ENCODE measurements at regions of chr17 and their contacts with region 1.

Region 1: DNA sequence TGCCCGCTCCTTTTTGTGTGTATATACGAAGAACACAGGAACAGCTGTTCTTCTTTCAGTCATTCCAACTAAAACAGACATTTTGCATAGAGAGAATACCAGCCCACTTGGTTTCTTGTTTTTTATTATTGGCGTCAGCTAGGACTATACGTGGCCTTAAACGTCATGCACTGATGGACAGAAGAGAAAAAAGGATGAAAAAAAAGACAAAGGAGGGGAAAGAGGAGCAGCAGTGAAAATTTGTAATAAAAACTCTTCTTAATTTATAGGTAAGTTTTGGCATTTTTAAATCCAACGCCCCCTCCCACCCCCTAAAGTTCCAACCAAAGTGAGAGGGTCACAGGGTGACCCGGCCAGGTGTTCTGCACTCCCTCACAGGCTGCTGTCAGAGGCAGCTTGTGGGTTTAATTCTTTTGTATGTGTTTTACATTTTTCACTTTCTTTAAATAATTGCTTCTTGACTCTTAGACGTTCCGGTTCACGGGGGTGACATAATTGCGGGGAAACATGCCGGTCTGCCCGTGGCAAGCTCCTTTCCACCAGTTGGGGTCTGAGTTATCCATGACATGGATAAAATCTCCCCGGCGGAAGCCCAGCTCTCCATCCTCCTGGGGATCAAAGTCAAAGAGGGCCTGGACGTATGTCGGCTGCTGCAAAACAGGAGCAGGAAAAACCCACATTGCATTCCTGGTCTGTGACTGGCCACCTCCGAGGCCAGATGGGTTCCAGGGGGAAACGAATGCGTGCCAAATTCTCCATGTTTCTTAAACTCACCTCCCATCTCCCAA is 30.9 kb upstream of the SLC25A19 start:
- DNase-seq: no peak
- ATAC-seq: no peak

Region 2: GRCh38 chr17:75405365-75406221 is 85.5 kb after region 1 on chr17 and contains the start of gene GRB2:
- intact Hi-C with region 1: loop called (anchors 2 kb)
- DNase-seq: peak; percentile 100
- ATAC-seq: peak; percentile 98
- total RNA-seq, gene GRB2: 59.0 TPM

Region 3: GRCh38 chr17:75412455-75413317 is 92.6 kb after region 1 on chr17:
- intact Hi-C with region 1: loop called (anchors 2 kb)
- DNase-seq: no peak
- ATAC-seq: peak; percentile 42

Region 4: DNA sequence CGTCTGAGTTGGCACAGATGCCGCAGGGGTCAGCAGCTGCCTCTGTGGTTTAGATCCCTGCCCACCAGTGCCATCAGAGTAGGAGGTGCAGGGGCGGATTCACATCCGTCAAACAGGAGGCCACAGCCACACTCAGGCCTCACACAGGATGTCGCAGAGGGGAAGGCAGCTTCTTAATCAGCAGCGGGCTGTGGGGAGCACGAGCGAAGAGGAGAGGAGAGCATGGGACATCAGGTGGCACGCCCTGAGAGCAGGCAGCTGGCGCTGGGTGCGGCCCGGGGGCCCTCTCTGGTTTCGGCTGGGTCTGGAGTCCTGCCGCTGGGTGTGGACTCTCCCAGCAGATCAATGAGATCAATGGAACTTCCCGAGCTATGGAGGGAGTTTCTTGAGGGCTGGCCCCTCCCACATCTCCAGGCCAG is 215.0 kb after region 1 on chr17:
- intact Hi-C with region 1: no loop called
- DNase-seq: peak; percentile 64
- ATAC-seq: peak; percentile 28